Caco-2 (cell line): ENCODE measurements at regions of chr19 and their contacts with region 1.

Region 1: GRCh38 chr19:55624109-55625003 is at the start of gene ZNF784:
- DNase-seq: peak; percentile 94 to 97
- H3K4me3 ChIP-seq: peak within 1 kb of the TSS; percentile 74
- H3K4me3 Mint-ChIP-seq: peak within 1 kb of the TSS; percentile 73
- H3K27ac Mint-ChIP-seq: peak within 1 kb of the TSS; percentile 85
- H3K4me1 ChIP-seq: no peaks in the 10 kb centered on the region
- H3K4me1 Mint-ChIP-seq: peaks cover 7% of the 10 kb centered on the region
- H3K27me3 ChIP-seq: no peaks in the 10 kb centered on the region
- H3K27me3 Mint-ChIP-seq: no peaks in the 10 kb centered on the region
- CTCF ChIP-seq: no peak
- total RNA-seq, gene ZNF784: 8.5 and 10.2 TPM in 2 replicates

Region 2: DNA sequence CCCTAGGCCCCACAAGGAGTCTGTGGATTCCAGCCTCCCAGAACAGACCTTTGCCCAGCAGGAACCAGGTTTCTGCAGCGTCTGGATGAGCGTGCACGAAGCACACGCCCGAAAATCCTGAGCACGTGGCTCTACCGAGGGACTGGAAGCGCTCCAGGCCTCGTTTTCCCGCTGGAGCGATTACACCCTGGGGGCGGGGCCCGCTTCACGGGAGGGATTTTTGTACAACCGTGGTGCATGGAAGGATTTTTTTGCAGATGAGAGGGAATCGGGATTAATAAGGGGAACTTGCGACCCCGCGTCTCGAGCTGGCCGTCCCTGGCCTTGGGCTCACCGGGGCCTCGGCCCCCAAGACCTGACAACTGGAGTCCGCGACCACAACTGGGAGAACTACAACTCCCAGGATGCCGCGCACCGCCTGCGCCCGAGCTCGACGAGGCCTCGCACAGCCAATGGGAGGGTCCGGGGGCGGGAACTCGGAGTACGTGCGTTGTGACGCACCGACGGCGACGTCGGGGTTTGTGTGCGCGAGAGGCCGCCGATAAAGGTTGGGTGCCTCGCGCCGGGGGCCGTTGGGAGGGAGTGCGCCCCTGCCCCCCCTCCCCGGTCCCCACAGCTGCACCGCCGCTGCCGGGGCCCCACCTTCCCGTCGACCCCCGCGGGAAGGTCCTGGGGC is 148.1 kb before region 1 on chr19 and contains the start of gene ZNF628:
- CTCF ChIA-PET with region 1: interaction called, 3 read pairs
- POLR2A ChIA-PET with region 1: interaction called, 13 read pairs
- intact Hi-C with region 1: no loop called
- DNase-seq: peak; percentile 99
- H3K4me3 ChIP-seq: peak within 1 kb of the TSS; percentile 47
- H3K4me3 Mint-ChIP-seq: peak within 1 kb of the TSS; percentile 94
- H3K27ac Mint-ChIP-seq: peak within 1 kb of the TSS; percentile 99
- H3K4me1 ChIP-seq: peaks cover 14% of the 10 kb centered on the region
- H3K4me1 Mint-ChIP-seq: peaks cover 19% of the 10 kb centered on the region
- H3K27me3 ChIP-seq: no peaks in the 10 kb centered on the region
- H3K27me3 Mint-ChIP-seq: no peaks in the 10 kb centered on the region
- CTCF ChIP-seq: no peak
- total RNA-seq, gene ZNF628: 12.3 and 13.9 TPM in 2 replicates

Region 3: GRCh38 chr19:55580628-55581144 is 43.7 kb before region 1 on chr19 and contains the start of gene ZNF579:
- CTCF ChIA-PET with region 1: no interaction called
- POLR2A ChIA-PET with region 1: interaction called, 3 read pairs
- intact Hi-C with region 1: loop called (anchors 2 kb)
- DNase-seq: peak; percentile 93
- H3K4me3 ChIP-seq: peak within 1 kb of the TSS; percentile 68
- H3K4me3 Mint-ChIP-seq: peak within 1 kb of the TSS; percentile 85
- H3K27ac Mint-ChIP-seq: peak within 1 kb of the TSS; percentile 46
- H3K4me1 ChIP-seq: peaks cover 19% of the 10 kb centered on the region
- H3K4me1 Mint-ChIP-seq: peaks cover 27% of the 10 kb centered on the region
- H3K27me3 ChIP-seq: no peaks in the 10 kb centered on the region
- H3K27me3 Mint-ChIP-seq: no peaks in the 10 kb centered on the region
- CTCF ChIP-seq: no peak
- total RNA-seq, gene ZNF579: 26.5 and 30.4 TPM in 2 replicates

Region 4: DNA sequence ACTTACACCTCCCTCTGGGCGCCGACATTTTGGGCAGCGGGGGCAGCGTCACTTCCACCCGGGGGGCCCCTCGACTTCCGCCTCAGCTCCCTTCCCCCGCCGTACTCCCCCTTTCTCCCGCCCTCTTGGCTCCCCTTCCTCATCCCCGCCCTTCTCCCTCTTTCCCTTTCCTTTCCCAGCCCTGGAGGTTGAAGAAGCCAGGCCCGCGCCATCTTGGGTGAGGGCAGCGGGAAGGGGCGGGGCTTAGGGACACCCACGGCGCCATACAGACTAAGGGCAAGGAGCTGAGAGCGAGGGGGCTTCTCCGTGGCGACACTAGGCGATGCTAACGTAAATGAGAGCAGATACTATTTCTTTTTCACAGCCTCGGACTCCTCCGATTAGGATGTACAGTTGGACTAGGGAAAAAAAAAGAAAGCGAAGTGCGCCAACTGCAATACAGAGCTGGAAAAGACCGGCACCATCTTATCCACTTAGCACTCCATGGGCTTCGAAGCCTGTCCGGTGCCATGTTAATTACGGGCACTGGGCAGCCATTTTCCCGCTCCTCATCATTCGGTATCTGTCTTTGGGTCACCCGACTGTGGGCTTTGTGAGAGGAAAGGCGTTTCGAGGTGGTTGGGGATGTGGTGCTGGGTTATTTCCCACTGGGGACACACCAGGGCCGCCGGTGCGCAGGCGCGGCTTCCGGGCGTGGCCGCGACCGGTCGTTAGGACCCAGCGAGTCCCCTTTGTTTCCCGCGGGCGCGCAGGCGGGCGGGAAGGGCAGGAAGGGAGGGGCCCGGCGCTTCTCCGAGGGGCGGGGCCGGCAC is 24.7 kb before region 1 on chr19 and contains the start of gene FIZ1:
- CTCF ChIA-PET with region 1: interaction called, 4 read pairs
- POLR2A ChIA-PET with region 1: interaction called, 18 read pairs
- intact Hi-C with region 1: loop called (anchors 1 kb)
- DNase-seq: peak; percentile 99
- H3K4me3 ChIP-seq: peak within 1 kb of the TSS; percentile 70
- H3K4me3 Mint-ChIP-seq: peak within 1 kb of the TSS; percentile 87
- H3K27ac Mint-ChIP-seq: peak within 1 kb of the TSS; percentile 98
- H3K4me1 ChIP-seq: peaks cover 5% of the 10 kb centered on the region
- H3K4me1 Mint-ChIP-seq: peaks cover 14% of the 10 kb centered on the region
- H3K27me3 ChIP-seq: no peaks in the 10 kb centered on the region
- H3K27me3 Mint-ChIP-seq: no peaks in the 10 kb centered on the region
- CTCF ChIP-seq: no peak
- total RNA-seq, gene FIZ1: 27.2 and 27.7 TPM in 2 replicates

Region 5: DNA sequence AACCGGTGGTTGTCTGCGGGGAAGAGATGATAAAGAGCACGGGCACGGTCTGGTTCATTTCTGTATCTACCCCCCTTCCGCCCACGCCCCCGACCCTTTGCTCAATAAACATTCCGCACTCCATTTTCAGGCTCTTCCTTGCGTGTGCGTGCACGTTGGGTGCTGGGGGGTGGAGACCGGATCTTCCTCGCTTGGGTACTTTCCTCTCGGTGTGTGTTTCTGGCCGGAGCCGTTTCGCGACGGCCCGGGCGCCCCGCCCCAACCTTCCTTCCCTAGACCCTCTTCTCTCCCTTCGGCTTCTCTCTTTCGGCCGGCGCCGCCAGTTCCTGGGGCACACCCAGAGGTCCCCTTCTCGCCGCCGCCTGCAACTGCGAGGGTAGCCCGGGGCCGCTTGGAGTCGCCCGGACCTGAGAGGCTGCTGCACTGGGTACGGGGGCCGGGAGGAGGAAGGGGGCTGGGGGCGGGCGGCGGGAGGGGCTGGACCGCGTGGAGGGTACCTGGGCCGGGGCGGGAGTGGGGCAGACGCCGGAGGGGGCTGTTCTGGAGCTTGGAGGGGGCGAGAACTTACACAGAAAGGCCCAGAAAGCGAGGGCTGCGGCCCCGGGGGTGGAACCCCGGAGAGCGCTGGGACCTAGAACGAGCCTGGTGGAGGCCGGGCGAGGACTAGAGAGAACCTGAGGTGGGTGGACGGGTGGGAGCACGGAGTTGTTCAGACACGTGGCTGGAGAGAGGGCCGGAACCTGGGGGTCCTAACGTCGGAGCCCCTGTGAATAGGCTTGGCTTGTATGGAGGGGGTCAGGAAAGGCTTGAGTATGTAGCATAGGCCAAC is 19.2 kb after region 1 on chr19 and contains the start of gene ZNF581:
- CTCF ChIA-PET with region 1: interaction called, 15 read pairs
- POLR2A ChIA-PET with region 1: interaction called, 3 read pairs
- intact Hi-C with region 1: no loop called
- DNase-seq: peak; percentile 87 to 89
- H3K4me3 ChIP-seq: peak within 1 kb of the TSS; percentile 84
- H3K4me3 Mint-ChIP-seq: peak within 1 kb of the TSS; percentile 86
- H3K27ac Mint-ChIP-seq: peak within 1 kb of the TSS; percentile 95
- H3K4me1 ChIP-seq: peaks cover 10% of the 10 kb centered on the region; the same call in 1 of the 2 replicates
- H3K4me1 Mint-ChIP-seq: peaks cover 37% of the 10 kb centered on the region
- H3K27me3 ChIP-seq: no peaks in the 10 kb centered on the region
- H3K27me3 Mint-ChIP-seq: no peaks in the 10 kb centered on the region
- CTCF ChIP-seq: no peak
- total RNA-seq, gene ZNF581: 46.2 and 47.4 TPM in 2 replicates

Region 6: GRCh38 chr19:55674841-55675660 is 50.7 kb after region 1 on chr19 and contains the start of gene EPN1:
- CTCF ChIA-PET with region 1: no interaction called
- POLR2A ChIA-PET with region 1: no interaction called
- intact Hi-C with region 1: no loop called
- DNase-seq: peak; percentile 98
- H3K4me3 ChIP-seq: peak within 1 kb of the TSS; percentile 76
- H3K4me3 Mint-ChIP-seq: peak within 1 kb of the TSS; percentile 94
- H3K27ac Mint-ChIP-seq: peak within 1 kb of the TSS; percentile 92
- H3K4me1 ChIP-seq: peaks cover 30% of the 10 kb centered on the region
- H3K4me1 Mint-ChIP-seq: peaks cover 47% of the 10 kb centered on the region
- H3K27me3 ChIP-seq: no peaks in the 10 kb centered on the region
- H3K27me3 Mint-ChIP-seq: no peaks in the 10 kb centered on the region
- CTCF ChIP-seq: no peak
- total RNA-seq, gene EPN1: 197 and 201 TPM in 2 replicates